ENCODE measurements at regions of chr1 and their contacts with region 1.

Region 1: GRCh38 chr1:146012737-146013403 is 8.7 kb downstream of the HJV start:
- DNase-seq: no peak
- H3K4me3 ChIP-seq: no peak overlapping the region
- H3K27ac ChIP-seq: no peak overlapping the region
- H3K4me1 ChIP-seq: peaks cover 0 to 18% (median 2%) of the 10 kb centered on the region in 4 donors
- H3K27me3 ChIP-seq: peaks cover 6% of the 10 kb centered on the region
- CTCF ChIP-seq: peak; percentile 63 to 80 (median 73)
- EP300 ChIP-seq: no peak
- POLR2A ChIP-seq: no peak

Region 2: GRCh38 chr1:145845514-145846161 is 167.2 kb before region 1 on chr1 and contains the start of gene NUDT17:
- in situ Hi-C with region 1: loop called in 1 of 4 experiments (anchors 5 kb)
- intact Hi-C with region 1: loop called (anchors 10 kb)
- DNase-seq: peak; percentile 80
- H3K4me3 ChIP-seq: peak within 1 kb of the TSS; percentile 4 to 56 (median 46)
- H3K27ac ChIP-seq: peak within 1 kb of the TSS; percentile 73 to 76 (median 73)
- H3K4me1 ChIP-seq: peaks cover 0 to 17% (median 11%) of the 10 kb centered on the region in 4 donors
- H3K27me3 ChIP-seq: no peaks in the 10 kb centered on the region
- CTCF ChIP-seq: peak; percentile 89 to 97 (median 91)
- EP300 ChIP-seq: no peak
- POLR2A ChIP-seq: no peak
- total RNA-seq, gene NUDT17: 0.95 to 2.2 (median 1.1) TPM in 3 of 4 donors, not detected in the other

Region 3: DNA sequence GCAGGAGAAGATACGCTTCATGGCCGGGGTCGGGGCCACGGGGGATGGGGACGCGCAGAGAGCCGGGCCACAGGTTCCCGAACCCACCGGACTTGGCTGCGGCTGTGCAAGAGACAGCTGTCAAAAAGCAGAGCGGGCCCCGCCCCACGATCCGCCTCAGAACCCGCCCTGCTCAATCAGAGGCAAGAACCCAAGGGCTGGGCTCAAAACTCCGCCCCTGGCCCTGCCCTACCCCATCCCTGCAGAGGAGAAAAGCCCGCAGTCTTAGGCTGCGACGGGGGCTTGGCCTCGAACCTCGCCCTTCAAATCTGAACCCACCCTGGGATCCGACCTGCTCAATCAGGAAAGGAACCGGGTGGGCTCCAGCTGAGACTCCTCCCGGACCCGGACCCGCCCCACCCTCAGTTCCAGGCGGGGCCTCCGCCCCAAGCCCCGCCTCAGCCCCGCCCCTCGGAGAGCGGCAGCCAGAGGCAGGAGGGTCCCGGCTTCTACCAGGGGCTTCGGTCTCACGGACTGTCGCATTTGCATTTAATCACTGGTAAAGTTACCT is 127.1 kb before region 1 on chr1 and contains the start of gene ANKRD35:
- in situ Hi-C with region 1: loop called in 1 of 4 experiments (anchors 25 kb)
- intact Hi-C with region 1: loop called (anchors 5 kb)
- DNase-seq: peak; percentile 87
- H3K4me3 ChIP-seq: peak within 1 kb of the TSS; percentile 27 to 82 (median 50)
- H3K27ac ChIP-seq: peak within 1 kb of the TSS in 1 of 4 donors; percentile 35
- H3K4me1 ChIP-seq: peaks cover 0 to 14% (median 8%) of the 10 kb centered on the region in 4 donors
- H3K27me3 ChIP-seq: peaks cover 25% of the 10 kb centered on the region
- CTCF ChIP-seq: no peak
- EP300 ChIP-seq: no peak
- POLR2A ChIP-seq: no peak
- total RNA-seq, gene ANKRD35: 1.1 to 1.8 (median 1.4) TPM in 3 of 4 donors, not detected in the other

Region 4: DNA sequence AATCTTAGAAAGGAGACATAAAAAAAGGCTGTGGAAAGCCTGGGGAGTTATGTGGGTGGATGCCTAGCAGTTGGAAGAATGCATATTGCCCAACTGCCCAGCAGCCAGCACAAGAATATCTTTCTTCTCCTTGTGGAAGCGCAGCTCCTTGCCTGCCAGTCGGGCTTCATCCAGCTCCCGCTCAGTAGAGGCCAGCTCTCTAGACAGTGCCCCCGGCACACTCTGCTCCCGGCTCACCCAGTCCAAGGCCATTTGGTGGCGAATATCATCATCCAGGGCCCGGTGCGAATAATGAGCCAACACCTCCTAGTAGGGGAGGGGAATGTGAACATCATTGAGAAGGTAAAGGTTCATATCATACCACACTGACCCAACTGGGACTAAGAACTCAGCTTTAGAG is 76.6 kb before region 1 on chr1:
- in situ Hi-C with region 1: no loop called
- intact Hi-C with region 1: no loop called
- DNase-seq: no peak
- H3K4me3 ChIP-seq: no peak overlapping the region
- H3K27ac ChIP-seq: no peak overlapping the region
- H3K4me1 ChIP-seq: peaks cover 0 to 4% (median 0%) of the 10 kb centered on the region in 4 donors
- H3K27me3 ChIP-seq: no peaks in the 10 kb centered on the region
- CTCF ChIP-seq: no peak
- EP300 ChIP-seq: no peak
- POLR2A ChIP-seq: no peak

Measured in transverse colon (tissue), 4 donors.